ENCODE measurements at regions of chr11 and their contacts with region 1.

Region 1: GRCh38 chr11:40384991-40385390 is 1074.5 kb downstream of the LRRC4C start:
- DNase-seq: no peak
- H3K4me3 ChIP-seq: no peak overlapping the region
- H3K27ac ChIP-seq: no peak overlapping the region
- H3K4me1 ChIP-seq: no peaks in the 10 kb centered on the region
- H3K27me3 ChIP-seq: no peaks in the 10 kb centered on the region
- CTCF ChIP-seq: no peak

Region 2: GRCh38 chr11:40328890-40329614 is 55.9 kb before region 1 on chr11:
- CTCF ChIA-PET with region 1: no interaction called
- POLR2A ChIA-PET with region 1: no interaction called
- intact Hi-C with region 1: no loop called
- DNase-seq: peak; percentile 99
- H3K4me3 ChIP-seq: peak overlapping the region; percentile 1
- H3K27ac ChIP-seq: peak overlapping the region; percentile 7
- H3K4me1 ChIP-seq: peaks cover 11% of the 10 kb centered on the region
- H3K27me3 ChIP-seq: no peaks in the 10 kb centered on the region
- CTCF ChIP-seq: no peak

Region 3: DNA sequence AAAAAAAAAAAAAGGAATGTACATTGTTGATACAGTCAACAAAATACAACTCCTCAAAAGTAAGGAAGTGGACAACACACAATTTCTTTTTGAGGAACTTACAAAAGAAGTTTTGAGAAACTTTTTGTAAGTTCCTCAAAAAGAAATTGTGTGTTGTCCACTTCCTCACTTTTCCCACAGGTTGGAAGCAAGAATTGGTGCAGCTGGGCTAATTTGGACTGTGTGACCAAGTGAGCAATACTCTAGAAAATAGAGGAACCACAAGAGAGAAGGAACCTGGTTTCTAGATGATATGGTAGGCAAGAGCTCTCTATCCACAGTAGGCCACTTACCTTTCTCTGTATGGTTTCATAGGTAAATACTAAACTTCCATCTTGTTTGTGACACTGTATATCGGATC is 20.6 kb after region 1 on chr11:
- CTCF ChIA-PET with region 1: no interaction called
- POLR2A ChIA-PET with region 1: interaction called, 21 read pairs
- intact Hi-C with region 1: no loop called
- DNase-seq: no peak
- H3K4me3 ChIP-seq: no peak overlapping the region
- H3K27ac ChIP-seq: no peak overlapping the region
- H3K4me1 ChIP-seq: no peaks in the 10 kb centered on the region
- H3K27me3 ChIP-seq: no peaks in the 10 kb centered on the region
- CTCF ChIP-seq: no peak

Measured in A673 (cell line).